ENCODE measurements at regions of chr9 and their contacts with region 1.

Region 1: GRCh38 chr9:131678499-131679111 is 61.3 kb downstream of the RAPGEF1 start:
- DNase-seq: peak; percentile 64 to 94 (median 73)
- H3K4me3 ChIP-seq: peak overlapping the region in 1 of 2 donors; percentile 30
- H3K4me3 Mint-ChIP-seq: peak overlapping the region; percentile 74 to 94 (median 90)
- H3K27ac ChIP-seq: peak overlapping the region; percentile 79
- H3K27ac Mint-ChIP-seq: peak overlapping the region; percentile 94 to 100 (median 98)
- H3K4me1 ChIP-seq: peaks cover 71% of the 10 kb centered on the region
- H3K4me1 Mint-ChIP-seq: peaks cover 74 to 100% (median 89%) of the 10 kb centered on the region in 4 donors
- H3K27me3 ChIP-seq: no peaks in the 10 kb centered on the region
- H3K27me3 Mint-ChIP-seq: no peaks in the 10 kb centered on the region

Region 2: DNA sequence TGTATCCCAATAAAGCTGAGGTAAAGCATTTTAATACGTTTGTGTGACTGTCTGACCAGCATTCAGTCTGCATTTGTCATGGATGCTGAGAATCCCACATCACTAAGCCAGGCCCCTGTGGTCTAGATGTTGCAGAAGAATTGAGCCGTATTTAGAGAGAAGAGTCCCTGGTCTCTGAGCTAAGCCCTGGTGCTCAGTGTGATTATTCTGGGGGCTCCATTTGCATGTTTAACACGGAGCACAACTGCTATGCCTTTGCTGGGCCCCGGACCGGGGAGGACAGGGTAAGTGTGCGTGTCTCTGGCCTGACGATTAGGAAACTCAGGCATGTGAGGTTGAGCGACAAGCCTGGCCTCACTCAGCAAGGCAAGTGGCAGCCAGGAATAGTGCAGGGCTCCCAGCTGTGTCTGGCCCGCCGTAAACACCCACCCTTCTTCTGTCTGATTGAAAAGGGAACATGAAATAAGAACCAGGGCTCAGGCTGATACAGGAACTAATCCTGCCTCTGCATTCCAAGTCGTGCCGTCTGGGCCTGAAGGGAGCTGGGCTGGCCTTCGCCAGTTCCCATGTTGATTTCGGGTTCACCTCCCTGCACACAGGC is 424.6 kb before region 1 on chr9:
- CTCF ChIA-PET with region 1: no interaction called
- POLR2A ChIA-PET with region 1: no interaction called
- intact Hi-C with region 1: loop called (anchors 10 kb)
- DNase-seq: no peak
- H3K4me3 ChIP-seq: no peak overlapping the region
- H3K4me3 Mint-ChIP-seq: peak overlapping the region in 7 of 8 donors; percentile 27 to 91 (median 46)
- H3K27ac ChIP-seq: peak overlapping the region; percentile 77
- H3K27ac Mint-ChIP-seq: peak overlapping the region; percentile 57 to 100 (median 72)
- H3K4me1 ChIP-seq: peaks cover 72% of the 10 kb centered on the region
- H3K4me1 Mint-ChIP-seq: peaks cover 27 to 73% (median 50%) of the 10 kb centered on the region in 4 donors
- H3K27me3 ChIP-seq: no peaks in the 10 kb centered on the region
- H3K27me3 Mint-ChIP-seq: no peaks in the 10 kb centered on the region

Region 3: GRCh38 chr9:131635285-131635684 is 43.3 kb before region 1 on chr9:
- CTCF ChIA-PET with region 1: interaction called, 10 read pairs
- POLR2A ChIA-PET with region 1: interaction called, 24 read pairs
- intact Hi-C with region 1: loop called (anchors 2 kb)
- DNase-seq: peak; percentile 74 to 94 (median 80)
- H3K4me3 ChIP-seq: no peak overlapping the region
- H3K4me3 Mint-ChIP-seq: peak overlapping the region in 5 of 8 donors; percentile 13 to 60 (median 26)
- H3K27ac ChIP-seq: peak overlapping the region; percentile 67
- H3K27ac Mint-ChIP-seq: peak overlapping the region; percentile 92 to 97 (median 96)
- H3K4me1 ChIP-seq: peaks cover 20% of the 10 kb centered on the region
- H3K4me1 Mint-ChIP-seq: peaks cover 23 to 50% (median 38%) of the 10 kb centered on the region in 4 donors
- H3K27me3 ChIP-seq: no peaks in the 10 kb centered on the region
- H3K27me3 Mint-ChIP-seq: no peaks in the 10 kb centered on the region

Region 4: GRCh38 chr9:131656356-131657036 is 22.1 kb before region 1 on chr9:
- CTCF ChIA-PET with region 1: interaction called, 4 read pairs
- POLR2A ChIA-PET with region 1: interaction called, 291 read pairs
- intact Hi-C with region 1: loop called (anchors 2 kb)
- DNase-seq: peak; percentile 73 to 93 (median 76)
- H3K4me3 ChIP-seq: peak overlapping the region in 1 of 2 donors; percentile 4
- H3K4me3 Mint-ChIP-seq: peak overlapping the region; percentile 50 to 86 (median 72)
- H3K27ac ChIP-seq: peak overlapping the region; percentile 70
- H3K27ac Mint-ChIP-seq: peak overlapping the region; percentile 92 to 99 (median 97)
- H3K4me1 ChIP-seq: peaks cover 81% of the 10 kb centered on the region
- H3K4me1 Mint-ChIP-seq: peaks cover 53 to 87% (median 73%) of the 10 kb centered on the region in 4 donors
- H3K27me3 ChIP-seq: no peaks in the 10 kb centered on the region
- H3K27me3 Mint-ChIP-seq: no peaks in the 10 kb centered on the region

Region 5: GRCh38 chr9:131697097-131697496 is 18.5 kb after region 1 on chr9:
- CTCF ChIA-PET with region 1: interaction called, 12 read pairs
- POLR2A ChIA-PET with region 1: interaction called, 73 read pairs
- intact Hi-C with region 1: no loop called
- DNase-seq: no peak
- H3K4me3 ChIP-seq: no peak overlapping the region
- H3K4me3 Mint-ChIP-seq: peak overlapping the region in 1 of 8 donors; percentile 48
- H3K27ac ChIP-seq: no peak overlapping the region
- H3K27ac Mint-ChIP-seq: peak overlapping the region in 4 of 7 donors; percentile 58 to 86 (median 68)
- H3K4me1 ChIP-seq: peaks cover 88% of the 10 kb centered on the region
- H3K4me1 Mint-ChIP-seq: peaks cover 77 to 99% (median 89%) of the 10 kb centered on the region in 4 donors
- H3K27me3 ChIP-seq: no peaks in the 10 kb centered on the region
- H3K27me3 Mint-ChIP-seq: no peaks in the 10 kb centered on the region

Region 6: GRCh38 chr9:131719262-131719908 is 40.8 kb after region 1 on chr9:
- CTCF ChIA-PET with region 1: interaction called, 3 read pairs
- POLR2A ChIA-PET with region 1: interaction called, 11 read pairs
- intact Hi-C with region 1: no loop called
- DNase-seq: no peak
- H3K4me3 ChIP-seq: no peak overlapping the region
- H3K4me3 Mint-ChIP-seq: peak overlapping the region in 6 of 8 donors; percentile 25 to 86 (median 60)
- H3K27ac ChIP-seq: peak overlapping the region; percentile 17
- H3K27ac Mint-ChIP-seq: peak overlapping the region; percentile 82 to 94 (median 89)
- H3K4me1 ChIP-seq: peaks cover 59% of the 10 kb centered on the region
- H3K4me1 Mint-ChIP-seq: peaks cover 55 to 94% (median 75%) of the 10 kb centered on the region in 4 donors
- H3K27me3 ChIP-seq: no peaks in the 10 kb centered on the region
- H3K27me3 Mint-ChIP-seq: no peaks in the 10 kb centered on the region

Region 7: DNA sequence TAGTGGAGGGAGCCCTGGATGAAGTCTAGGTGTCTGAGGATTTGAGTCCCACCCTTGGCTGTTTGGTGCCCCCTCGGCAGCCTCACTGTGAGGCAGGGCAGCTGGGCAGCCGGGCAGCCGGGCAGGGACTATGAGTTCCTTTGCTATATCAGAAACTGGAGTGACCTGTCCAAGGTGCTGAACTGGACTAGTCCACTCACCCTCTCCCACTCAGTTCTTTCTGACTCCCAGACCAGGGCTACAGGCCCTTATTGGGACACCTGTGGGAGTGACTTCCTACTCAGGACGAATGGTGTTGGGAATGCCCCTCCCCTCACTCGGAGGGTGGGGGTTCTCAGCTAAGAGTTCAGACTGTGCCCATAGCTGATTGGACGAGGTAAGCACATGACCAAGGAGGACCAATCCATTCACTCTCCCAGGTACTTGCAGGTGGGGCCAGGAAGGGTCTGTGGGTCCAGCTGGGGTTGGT is 95.3 kb after region 1 on chr9:
- CTCF ChIA-PET with region 1: no interaction called
- POLR2A ChIA-PET with region 1: no interaction called
- intact Hi-C with region 1: no loop called
- DNase-seq: peak in 3 of 5 donors; percentile 10 to 22 (median 15)
- H3K4me3 ChIP-seq: no peak overlapping the region
- H3K4me3 Mint-ChIP-seq: no peak overlapping the region
- H3K27ac ChIP-seq: no peak overlapping the region
- H3K27ac Mint-ChIP-seq: no peak overlapping the region
- H3K4me1 ChIP-seq: no peaks in the 10 kb centered on the region
- H3K4me1 Mint-ChIP-seq: no peaks in the 10 kb centered on the region
- H3K27me3 ChIP-seq: no peaks in the 10 kb centered on the region
- H3K27me3 Mint-ChIP-seq: peaks cover 17% of the 10 kb centered on the region in 2 donors